Colonic mucosa (tissue), 4 donors: ENCODE measurements at regions of chr12 and their contacts with region 1.

Region 1: GRCh38 chr12:44774815-44775411 is 101.2 kb downstream of the NELL2 start:
- DNase-seq: peak; percentile 41
- H3K4me3 ChIP-seq: no peak overlapping the region
- H3K27ac ChIP-seq: no peak overlapping the region
- H3K4me1 ChIP-seq: no peaks in the 10 kb centered on the region
- H3K27me3 ChIP-seq: no peaks in the 10 kb centered on the region
- CTCF ChIP-seq: peak; percentile 72

Region 2: DNA sequence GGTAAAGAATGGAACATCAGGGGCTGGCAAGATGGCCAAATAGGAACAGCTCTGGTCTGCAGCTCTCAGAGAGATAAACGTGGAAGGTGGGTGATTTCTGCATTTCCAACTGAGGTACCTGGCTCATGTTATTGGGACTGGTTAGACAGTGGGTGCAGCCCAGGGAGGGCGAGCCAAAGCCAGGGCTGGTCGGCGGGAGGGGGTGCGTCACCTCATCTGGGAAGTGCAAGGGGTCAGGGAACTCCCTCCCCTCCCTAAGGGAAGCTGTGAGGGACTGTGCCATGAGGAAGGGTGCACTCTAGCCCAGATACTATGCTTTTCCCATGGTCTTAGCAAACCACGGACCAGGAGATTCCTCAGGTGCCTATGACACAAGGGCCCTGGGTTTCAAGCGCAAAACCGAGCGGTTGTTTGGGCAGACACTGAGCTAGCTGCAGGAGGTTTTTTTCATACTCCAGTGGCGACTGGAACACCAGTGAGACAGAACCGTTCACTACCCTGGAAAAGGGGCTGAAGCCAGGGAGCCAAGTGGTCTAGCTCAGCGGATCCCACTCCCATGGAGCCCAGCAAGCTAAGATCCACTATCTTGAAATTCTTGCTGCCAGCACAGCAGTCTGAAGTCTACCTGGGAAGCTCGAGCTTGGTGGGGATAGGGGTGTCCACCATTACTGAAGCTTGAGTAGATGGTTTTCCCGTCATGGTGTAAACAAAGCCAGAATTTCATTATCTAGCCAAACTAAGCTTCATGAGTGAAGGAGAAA is 216.4 kb before region 1 on chr12:
- intact Hi-C with region 1: no loop called
- DNase-seq: no peak
- H3K4me3 ChIP-seq: no peak overlapping the region
- H3K27ac ChIP-seq: no peak overlapping the region
- H3K4me1 ChIP-seq: no peaks in the 10 kb centered on the region
- H3K27me3 ChIP-seq: no peaks in the 10 kb centered on the region
- CTCF ChIP-seq: no peak

Region 3: GRCh38 chr12:44930972-44931600 is 156.2 kb after region 1 on chr12:
- intact Hi-C with region 1: loop called (anchors 5 kb)
- DNase-seq: no peak
- H3K4me3 ChIP-seq: no peak overlapping the region
- H3K27ac ChIP-seq: no peak overlapping the region
- H3K4me1 ChIP-seq: no peaks in the 10 kb centered on the region
- H3K27me3 ChIP-seq: no peaks in the 10 kb centered on the region
- CTCF ChIP-seq: peak; percentile 54